Naive thymus-derived CD4-positive, alpha-beta T cell (primary cell): ENCODE measurements at regions of chr21 and their contacts with region 1.

Region 1: GRCh38 chr21:36288651-36289243 is 31.2 kb upstream of the MORC3 start:
- DNase-seq: peak in 6 of 9 donors; percentile 55 to 77 (median 68)
- ATAC-seq: peak; percentile 87
- H3K4me3 ChIP-seq: peak overlapping the region; percentile 40
- H3K4me3 Mint-ChIP-seq: peak overlapping the region; percentile 56 to 90 (median 80)
- H3K27ac ChIP-seq: peak overlapping the region; percentile 96
- H3K27ac Mint-ChIP-seq: peak overlapping the region; percentile 94 to 100 (median 98)
- H3K4me1 ChIP-seq: peaks cover 7 to 9% of the 10 kb centered on the region in 2 donors
- H3K4me1 Mint-ChIP-seq: peaks cover 6 to 30% (median 23%) of the 10 kb centered on the region in 7 donors
- H3K27me3 ChIP-seq: no peaks in the 10 kb centered on the region
- H3K27me3 Mint-ChIP-seq: peaks cover 0 to 3% (median 0%) of the 10 kb centered on the region in 5 donors

Region 2: GRCh38 chr21:36254106-36254941 is 34.4 kb before region 1 on chr21:
- CTCF ChIA-PET with region 1: interaction called, 5 read pairs
- POLR2A ChIA-PET with region 1: interaction called, 20 read pairs
- intact Hi-C with region 1: loop called in 1 of 2 experiments (anchors 5 kb)
- DNase-seq: no peak
- ATAC-seq: no peak
- H3K4me3 ChIP-seq: no peak overlapping the region
- H3K4me3 Mint-ChIP-seq: no peak overlapping the region
- H3K27ac ChIP-seq: no peak overlapping the region
- H3K27ac Mint-ChIP-seq: peak overlapping the region in 5 of 9 donors; percentile 8 to 48 (median 32)
- H3K4me1 ChIP-seq: no peaks in the 10 kb centered on the region
- H3K4me1 Mint-ChIP-seq: peaks cover 7 to 26% (median 23%) of the 10 kb centered on the region in 7 donors
- H3K27me3 ChIP-seq: no peaks in the 10 kb centered on the region
- H3K27me3 Mint-ChIP-seq: no peaks in the 10 kb centered on the region

Region 3: DNA sequence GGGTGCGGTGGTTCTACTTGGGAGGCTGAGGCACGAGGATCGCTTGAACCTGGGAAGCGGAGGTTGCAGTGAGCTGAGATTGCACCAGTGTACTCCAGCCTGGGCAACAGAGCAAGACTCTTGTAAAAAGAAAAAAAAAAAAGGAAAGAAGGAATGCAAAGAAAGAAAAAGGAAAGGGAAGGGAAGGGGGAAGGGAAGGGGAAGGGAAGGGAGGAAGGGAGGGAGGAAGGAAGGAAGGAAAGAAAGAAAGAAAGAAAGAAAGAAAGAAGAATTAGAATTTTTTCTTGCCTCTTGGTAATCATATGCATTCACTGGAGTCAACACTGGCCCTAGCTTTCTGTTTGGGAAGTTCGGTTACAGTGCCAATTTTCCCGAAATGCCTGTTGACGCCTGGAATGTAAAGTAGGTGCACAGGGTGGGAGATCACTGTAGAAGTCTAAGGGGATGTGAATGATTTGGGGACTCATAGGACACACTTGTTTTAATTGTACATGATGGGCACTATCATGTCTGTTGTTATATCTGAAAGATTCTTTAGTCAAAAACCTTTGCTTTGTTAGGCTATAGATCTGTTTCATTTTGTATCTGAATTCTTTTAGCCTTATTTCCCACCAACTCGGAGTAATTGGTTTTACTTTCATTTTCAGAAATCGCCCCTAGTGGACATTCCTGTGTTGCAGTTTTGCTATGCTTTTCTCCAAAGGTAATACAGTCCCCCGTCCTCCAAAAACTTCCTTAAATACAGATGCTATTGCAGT is 28.5 kb before region 1 on chr21:
- CTCF ChIA-PET with region 1: interaction called, 5 read pairs
- POLR2A ChIA-PET with region 1: interaction called, 20 read pairs
- intact Hi-C with region 1: loop called in 1 of 2 experiments (anchors 1 kb)
- DNase-seq: peak in 7 of 9 donors; percentile 54 to 76 (median 68)
- ATAC-seq: peak; percentile 88
- H3K4me3 ChIP-seq: peak overlapping the region; percentile 57
- H3K4me3 Mint-ChIP-seq: peak overlapping the region; percentile 81 to 91 (median 86)
- H3K27ac ChIP-seq: peak overlapping the region; percentile 76
- H3K27ac Mint-ChIP-seq: peak overlapping the region; percentile 89 to 97 (median 93)
- H3K4me1 ChIP-seq: peaks cover 0 to 6% of the 10 kb centered on the region in 2 donors
- H3K4me1 Mint-ChIP-seq: peaks cover 9 to 24% (median 18%) of the 10 kb centered on the region in 7 donors
- H3K27me3 ChIP-seq: no peaks in the 10 kb centered on the region
- H3K27me3 Mint-ChIP-seq: no peaks in the 10 kb centered on the region

Region 4: DNA sequence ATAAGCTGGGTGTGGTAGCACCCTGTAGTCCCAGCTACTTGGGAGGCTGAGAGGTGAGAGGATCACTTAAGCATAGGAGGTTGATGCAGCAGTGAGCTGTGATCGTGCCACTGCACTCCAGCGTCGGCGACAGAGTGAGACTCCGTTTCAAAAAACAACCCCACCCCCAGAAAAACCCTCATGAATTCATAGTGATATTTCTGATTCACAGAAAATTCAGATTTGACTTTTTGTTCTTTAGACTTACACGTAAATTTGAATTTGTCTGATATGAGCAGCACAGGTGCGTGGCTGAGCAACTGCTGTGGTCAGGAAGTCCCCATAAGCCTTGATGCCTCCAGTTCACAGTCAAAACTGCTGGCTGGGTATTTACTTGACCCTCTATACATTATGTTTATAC is 21.3 kb after region 1 on chr21:
- CTCF ChIA-PET with region 1: no interaction called
- POLR2A ChIA-PET with region 1: interaction called, 12 read pairs
- intact Hi-C with region 1: no loop called
- DNase-seq: peak in 1 of 9 donors; percentile 25
- ATAC-seq: peak; percentile 83
- H3K4me3 ChIP-seq: no peak overlapping the region
- H3K4me3 Mint-ChIP-seq: peak overlapping the region in 5 of 10 donors; percentile 16 to 49 (median 42)
- H3K27ac ChIP-seq: no peak overlapping the region
- H3K27ac Mint-ChIP-seq: peak overlapping the region in 7 of 9 donors; percentile 32 to 71 (median 60)
- H3K4me1 ChIP-seq: no peaks in the 10 kb centered on the region
- H3K4me1 Mint-ChIP-seq: peaks cover 0 to 9% (median 4%) of the 10 kb centered on the region in 7 donors
- H3K27me3 ChIP-seq: no peaks in the 10 kb centered on the region
- H3K27me3 Mint-ChIP-seq: peaks cover 0 to 2% (median 0%) of the 10 kb centered on the region in 5 donors

Region 5: DNA sequence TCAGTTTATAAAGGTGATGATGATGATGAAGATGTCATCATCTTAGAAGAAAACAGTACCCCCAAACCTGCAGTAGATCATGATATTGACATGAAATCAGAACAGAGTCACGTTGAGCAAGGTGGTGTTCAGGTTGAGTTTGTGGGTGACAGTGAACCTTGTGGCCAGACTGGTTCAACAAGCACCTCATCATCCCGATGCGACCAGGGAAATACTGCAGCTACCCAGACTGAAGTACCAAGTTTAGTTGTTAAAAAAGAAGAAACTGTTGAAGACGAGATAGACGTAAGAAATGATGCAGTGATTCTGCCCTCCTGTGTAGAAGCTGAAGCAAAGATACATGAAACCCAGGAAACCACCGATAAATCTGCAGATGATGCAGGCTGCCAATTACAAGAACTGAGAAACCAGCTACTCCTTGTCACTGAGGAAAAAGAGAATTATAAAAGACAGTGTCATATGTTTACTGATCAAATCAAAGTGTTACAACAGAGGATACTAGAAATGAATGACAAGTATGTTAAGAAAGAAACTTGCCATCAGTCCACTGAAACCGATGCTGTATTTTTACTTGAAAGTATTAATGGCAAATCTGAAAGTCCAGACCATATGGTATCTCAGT is 80.4 kb after region 1 on chr21:
- CTCF ChIA-PET with region 1: no interaction called
- POLR2A ChIA-PET with region 1: no interaction called
- intact Hi-C with region 1: no loop called
- DNase-seq: no peak
- ATAC-seq: no peak
- H3K4me3 ChIP-seq: no peak overlapping the region
- H3K4me3 Mint-ChIP-seq: no peak overlapping the region
- H3K27ac ChIP-seq: no peak overlapping the region
- H3K27ac Mint-ChIP-seq: peak overlapping the region in 6 of 9 donors; percentile 10 to 62 (median 30)
- H3K4me1 ChIP-seq: no peaks in the 10 kb centered on the region
- H3K4me1 Mint-ChIP-seq: peaks cover 0 to 7% (median 3%) of the 10 kb centered on the region in 7 donors
- H3K27me3 ChIP-seq: no peaks in the 10 kb centered on the region
- H3K27me3 Mint-ChIP-seq: no peaks in the 10 kb centered on the region

Region 6: GRCh38 chr21:36385233-36386030 is 96.7 kb after region 1 on chr21 and contains the start of gene CHAF1B:
- CTCF ChIA-PET with region 1: no interaction called
- POLR2A ChIA-PET with region 1: no interaction called
- intact Hi-C with region 1: loop called in 1 of 2 experiments (anchors 5 kb)
- DNase-seq: peak; percentile 63 to 94 (median 82)
- ATAC-seq: peak; percentile 99
- H3K4me3 ChIP-seq: peak within 1 kb of the TSS; percentile 77
- H3K4me3 Mint-ChIP-seq: peak within 1 kb of the TSS; percentile 70 to 89 (median 85)
- H3K27ac ChIP-seq: peak within 1 kb of the TSS; percentile 68
- H3K27ac Mint-ChIP-seq: peak within 1 kb of the TSS in 8 of 9 donors; percentile 7 to 83 (median 56)
- H3K4me1 ChIP-seq: peaks cover 0 to 4% of the 10 kb centered on the region in 2 donors
- H3K4me1 Mint-ChIP-seq: peaks cover 4 to 30% (median 6%) of the 10 kb centered on the region in 7 donors
- H3K27me3 ChIP-seq: no peaks in the 10 kb centered on the region
- H3K27me3 Mint-ChIP-seq: no peaks in the 10 kb centered on the region
- total RNA-seq, gene CHAF1B: 1.5 to 21.4 (median 4.0) TPM